ENCODE measurements at regions of chr20 and their contacts with region 1.

Region 1: DNA sequence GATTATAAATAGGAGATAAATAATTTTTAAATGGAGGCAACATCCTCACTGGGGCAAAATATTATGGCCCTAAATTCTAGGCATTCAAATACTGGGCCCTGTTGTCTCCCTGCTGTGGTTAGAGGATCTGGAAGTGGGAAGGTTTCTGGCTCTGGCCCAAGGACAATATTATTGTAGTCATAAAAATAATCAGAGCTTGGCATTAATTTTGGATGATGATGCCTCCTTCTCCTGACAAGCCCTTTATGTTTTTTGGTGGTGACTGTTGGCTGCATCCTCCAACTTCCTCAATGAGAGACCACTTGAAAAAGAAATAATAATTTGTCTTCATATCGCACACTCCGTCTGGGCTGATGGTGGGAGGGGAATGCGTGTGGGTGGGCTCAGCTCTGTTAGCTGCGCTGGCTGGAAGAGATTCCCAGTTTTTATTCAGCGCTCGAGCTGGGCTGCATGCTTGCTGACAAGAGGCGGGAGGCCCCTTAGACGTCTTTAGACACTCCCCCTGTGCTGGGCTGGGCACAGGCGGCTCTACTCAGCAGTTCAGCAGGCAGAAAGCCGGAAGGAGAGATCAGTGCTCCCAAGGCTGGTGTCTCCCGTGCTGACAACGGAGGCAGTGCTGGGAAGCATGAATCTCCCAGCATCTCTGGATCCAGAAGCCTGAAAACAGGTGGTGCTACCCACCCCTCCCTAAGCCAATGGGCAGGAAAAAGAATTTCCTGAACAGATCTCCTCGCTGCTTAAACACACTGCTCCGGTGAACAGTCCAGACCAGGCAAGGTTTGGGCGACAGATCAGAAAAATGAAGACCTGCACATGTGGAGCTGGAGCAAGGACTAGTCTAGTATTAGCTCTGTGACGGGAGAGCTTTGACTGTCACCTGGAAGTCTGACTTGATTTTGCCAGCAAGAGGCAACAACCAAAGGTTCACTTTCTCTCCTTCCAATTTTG is 97.7 kb downstream of the SYCP2 start:
- DNase-seq: peak; percentile 81
- H3K4me3 Mint-ChIP-seq: peak overlapping the region; percentile 78
- H3K27ac Mint-ChIP-seq: peak overlapping the region; percentile 53
- H3K4me1 Mint-ChIP-seq: peaks cover 57% of the 10 kb centered on the region
- H3K27me3 Mint-ChIP-seq: no peaks in the 10 kb centered on the region
- CTCF ChIP-seq: no peak

Region 2: DNA sequence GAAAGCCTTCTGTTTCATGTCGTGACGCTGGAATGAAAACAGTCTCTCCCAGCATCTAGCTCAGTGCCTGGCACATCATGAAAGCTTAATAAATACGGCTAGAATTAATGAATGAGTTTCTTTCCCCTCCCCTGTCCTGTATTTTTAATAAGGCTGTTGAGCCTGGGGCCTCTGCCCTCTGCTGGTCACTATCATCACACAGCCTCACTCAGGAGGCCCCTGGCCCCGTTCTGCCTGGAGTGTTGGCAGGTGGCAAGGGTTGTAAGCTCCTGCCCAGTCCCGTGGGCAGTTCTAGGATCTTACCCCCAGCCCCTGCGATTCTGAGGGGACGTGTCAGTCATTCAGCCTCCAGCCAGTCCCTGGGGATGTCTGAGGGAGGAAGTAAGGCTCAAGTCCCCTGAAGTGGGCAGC is 190.0 kb before region 1 on chr20:
- CTCF ChIA-PET with region 1: no interaction called
- POLR2A ChIA-PET with region 1: no interaction called
- intact Hi-C with region 1: no loop called
- DNase-seq: no peak
- H3K4me3 Mint-ChIP-seq: no peak overlapping the region
- H3K27ac Mint-ChIP-seq: no peak overlapping the region
- H3K4me1 Mint-ChIP-seq: no peaks in the 10 kb centered on the region
- H3K27me3 Mint-ChIP-seq: peaks cover 90% of the 10 kb centered on the region
- CTCF ChIP-seq: no peak

Region 3: DNA sequence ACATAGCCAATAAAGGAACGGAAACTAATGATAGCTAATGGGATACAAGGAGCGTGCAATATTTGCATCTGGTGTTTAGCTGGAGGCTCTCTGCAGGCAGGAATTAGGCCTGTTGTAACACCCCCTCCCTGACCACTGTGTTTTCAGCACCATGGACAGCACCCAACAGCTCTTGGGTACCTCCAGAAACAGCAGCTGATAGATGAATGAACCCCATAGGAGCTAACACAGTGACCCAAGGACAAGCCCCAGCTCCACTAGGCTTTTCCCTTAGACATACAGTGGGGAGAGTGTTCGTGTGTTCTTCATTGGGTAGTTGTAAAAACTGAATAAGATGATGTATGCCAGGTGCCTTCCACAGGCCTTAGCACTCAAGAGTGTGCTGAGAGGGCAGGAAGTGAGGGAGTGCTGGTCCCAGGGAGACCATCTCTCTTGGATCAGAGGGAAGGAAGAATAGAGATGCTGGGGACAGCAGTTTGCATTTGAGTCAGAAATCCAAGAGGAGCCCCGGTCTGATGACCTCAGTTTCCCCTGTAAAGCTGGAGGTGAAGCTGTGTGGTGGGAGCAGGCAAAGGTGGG is 70.0 kb before region 1 on chr20:
- CTCF ChIA-PET with region 1: interaction called, 31 read pairs
- POLR2A ChIA-PET with region 1: no interaction called
- intact Hi-C with region 1: no loop called
- DNase-seq: peak; percentile 52
- H3K4me3 Mint-ChIP-seq: no peak overlapping the region
- H3K27ac Mint-ChIP-seq: no peak overlapping the region
- H3K4me1 Mint-ChIP-seq: no peaks in the 10 kb centered on the region
- H3K27me3 Mint-ChIP-seq: peaks cover 47% of the 10 kb centered on the region
- CTCF ChIP-seq: no peak

Region 4: DNA sequence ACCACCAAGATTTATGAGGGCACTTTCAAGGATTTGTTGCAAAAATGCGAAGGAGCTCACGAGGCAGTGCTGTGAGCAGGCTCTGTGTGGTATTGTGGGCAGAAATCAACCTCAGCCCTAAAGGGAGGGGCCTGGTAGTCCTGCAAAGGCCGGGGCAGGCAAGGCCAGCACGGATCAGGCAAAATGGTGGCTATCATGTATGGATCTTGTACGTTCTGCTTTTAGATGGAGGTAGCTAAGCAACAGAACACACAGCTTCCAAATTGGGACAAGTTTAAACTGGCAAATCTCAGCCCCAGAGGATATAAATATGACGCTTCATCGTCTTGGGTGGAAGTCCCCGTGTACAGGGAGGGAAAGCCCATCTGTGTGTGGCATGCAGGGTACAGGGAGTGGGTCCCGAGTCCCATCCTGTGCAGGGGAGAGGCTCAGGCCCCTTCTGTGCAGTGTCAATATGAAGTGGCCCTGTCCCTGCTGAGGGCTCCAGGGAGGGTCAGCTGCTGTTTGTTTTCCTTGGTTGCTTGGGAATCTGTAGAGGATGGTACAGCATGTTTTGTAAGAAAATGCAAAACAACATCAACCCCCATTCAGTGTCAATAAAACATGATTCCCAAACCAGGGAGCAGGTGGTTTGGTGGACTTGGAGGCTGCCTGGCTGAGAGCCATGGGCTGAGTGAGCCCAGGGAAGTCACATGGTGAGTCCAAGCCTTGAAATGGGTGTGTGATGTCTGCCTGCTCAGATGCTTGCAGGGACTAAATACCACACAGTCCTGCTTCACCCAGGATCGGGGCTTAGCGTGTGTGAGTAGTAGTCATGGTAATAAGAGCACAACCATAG is 15.3 kb before region 1 on chr20:
- CTCF ChIA-PET with region 1: interaction called, 9 read pairs
- POLR2A ChIA-PET with region 1: interaction called, 94 read pairs
- intact Hi-C with region 1: no loop called
- DNase-seq: peak; percentile 22
- H3K4me3 Mint-ChIP-seq: peak overlapping the region; percentile 17
- H3K27ac Mint-ChIP-seq: peak overlapping the region; percentile 97
- H3K4me1 Mint-ChIP-seq: peaks cover 28% of the 10 kb centered on the region
- H3K27me3 Mint-ChIP-seq: no peaks in the 10 kb centered on the region
- CTCF ChIP-seq: no peak